ENCODE measurements at regions of chr16 and their contacts with region 1.

Region 1: DNA sequence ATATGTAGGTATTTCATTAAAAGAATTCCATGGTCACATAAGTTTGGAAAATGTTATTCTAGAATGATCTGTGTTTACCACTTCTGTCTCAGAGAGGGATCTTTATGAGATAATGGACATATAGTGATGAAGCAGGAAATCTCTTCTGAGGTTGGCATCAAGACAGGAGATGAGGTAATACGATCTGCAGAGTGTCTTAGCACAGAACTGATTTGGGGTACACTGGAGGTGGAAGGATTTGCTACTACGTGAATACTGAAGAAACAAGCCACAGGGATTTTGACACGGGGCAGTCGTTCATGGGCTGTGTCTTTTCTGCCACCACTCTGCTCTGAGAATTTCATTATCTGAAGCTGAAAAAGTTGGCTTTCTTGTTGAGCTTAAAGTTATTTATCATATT is 5.5 kb downstream of the CBFB start:
- DNase-seq: no peak
- H3K4me3 Mint-ChIP-seq: no peak overlapping the region
- H3K27ac Mint-ChIP-seq: no peak overlapping the region
- H3K4me1 Mint-ChIP-seq: peaks cover 59% of the 10 kb centered on the region
- H3K27me3 Mint-ChIP-seq: no peaks in the 10 kb centered on the region

Region 2: GRCh38 chr16:67183627-67184328 is 149.3 kb after region 1 on chr16 and contains the start of gene MATCAP1:
- CTCF ChIA-PET with region 1: no interaction called
- POLR2A ChIA-PET with region 1: interaction called, 10 read pairs
- DNase-seq: peak; percentile 98
- H3K4me3 Mint-ChIP-seq: peak within 1 kb of the TSS; percentile 79
- H3K27ac Mint-ChIP-seq: no peak within 1 kb of the TSS
- H3K4me1 Mint-ChIP-seq: peaks cover 25% of the 10 kb centered on the region
- H3K27me3 Mint-ChIP-seq: peaks cover 7% of the 10 kb centered on the region
- total RNA-seq, gene MATCAP1: 47.5 to 51.4 TPM